Natural killer cell (primary cell): ENCODE measurements at regions of chr19 and their contacts with region 1.

Region 1: GRCh38 chr19:50357178-50358100 is 8.0 kb downstream of the NAPSA start:
- DNase-seq: peak; percentile 84 to 93
- ATAC-seq: peak; percentile 81 to 91 (median 85)
- H3K4me3 ChIP-seq: peak overlapping the region; percentile 65
- H3K4me3 Mint-ChIP-seq: peak overlapping the region; percentile 95
- H3K27ac ChIP-seq: peak overlapping the region; percentile 95
- H3K27ac Mint-ChIP-seq: peak overlapping the region; percentile 97 to 99
- H3K4me1 ChIP-seq: peaks cover 31% of the 10 kb centered on the region
- H3K4me1 Mint-ChIP-seq: peaks cover 31 to 46% of the 10 kb centered on the region in 2 donors
- H3K27me3 ChIP-seq: no peaks in the 10 kb centered on the region
- H3K27me3 Mint-ChIP-seq: no peaks in the 10 kb centered on the region
- CTCF ChIP-seq: peak; percentile 88

Region 2: GRCh38 chr19:50414864-50415660 is 57.6 kb after region 1 on chr19:
- intact Hi-C with region 1: loop called (anchors 1 kb)
- DNase-seq: peak; percentile 72 to 83
- ATAC-seq: peak; percentile 78 to 93 (median 92)
- H3K4me3 ChIP-seq: peak overlapping the region; percentile 28
- H3K4me3 Mint-ChIP-seq: no peak overlapping the region
- H3K27ac ChIP-seq: peak overlapping the region; percentile 84
- H3K27ac Mint-ChIP-seq: peak overlapping the region in 1 of 2 donors; percentile 70
- H3K4me1 ChIP-seq: peaks cover 47% of the 10 kb centered on the region
- H3K4me1 Mint-ChIP-seq: peaks cover 9 to 24% of the 10 kb centered on the region in 2 donors
- H3K27me3 ChIP-seq: peaks cover 3% of the 10 kb centered on the region
- H3K27me3 Mint-ChIP-seq: peaks cover 14 to 15% of the 10 kb centered on the region in 2 donors
- CTCF ChIP-seq: peak; percentile 80

Region 3: GRCh38 chr19:50461066-50461875 is 103.8 kb after region 1 on chr19:
- intact Hi-C with region 1: loop called (anchors 1 kb)
- DNase-seq: peak; percentile 53 to 80
- ATAC-seq: peak; percentile 87 to 97 (median 93)
- H3K4me3 ChIP-seq: no peak overlapping the region
- H3K4me3 Mint-ChIP-seq: no peak overlapping the region
- H3K27ac ChIP-seq: peak overlapping the region; percentile 20
- H3K27ac Mint-ChIP-seq: no peak overlapping the region
- H3K4me1 ChIP-seq: peaks cover 11% of the 10 kb centered on the region
- H3K4me1 Mint-ChIP-seq: peaks cover 0 to 6% of the 10 kb centered on the region in 2 donors
- H3K27me3 ChIP-seq: no peaks in the 10 kb centered on the region
- H3K27me3 Mint-ChIP-seq: peaks cover 0 to 17% of the 10 kb centered on the region in 2 donors
- CTCF ChIP-seq: peak; percentile 70

Region 4: DNA sequence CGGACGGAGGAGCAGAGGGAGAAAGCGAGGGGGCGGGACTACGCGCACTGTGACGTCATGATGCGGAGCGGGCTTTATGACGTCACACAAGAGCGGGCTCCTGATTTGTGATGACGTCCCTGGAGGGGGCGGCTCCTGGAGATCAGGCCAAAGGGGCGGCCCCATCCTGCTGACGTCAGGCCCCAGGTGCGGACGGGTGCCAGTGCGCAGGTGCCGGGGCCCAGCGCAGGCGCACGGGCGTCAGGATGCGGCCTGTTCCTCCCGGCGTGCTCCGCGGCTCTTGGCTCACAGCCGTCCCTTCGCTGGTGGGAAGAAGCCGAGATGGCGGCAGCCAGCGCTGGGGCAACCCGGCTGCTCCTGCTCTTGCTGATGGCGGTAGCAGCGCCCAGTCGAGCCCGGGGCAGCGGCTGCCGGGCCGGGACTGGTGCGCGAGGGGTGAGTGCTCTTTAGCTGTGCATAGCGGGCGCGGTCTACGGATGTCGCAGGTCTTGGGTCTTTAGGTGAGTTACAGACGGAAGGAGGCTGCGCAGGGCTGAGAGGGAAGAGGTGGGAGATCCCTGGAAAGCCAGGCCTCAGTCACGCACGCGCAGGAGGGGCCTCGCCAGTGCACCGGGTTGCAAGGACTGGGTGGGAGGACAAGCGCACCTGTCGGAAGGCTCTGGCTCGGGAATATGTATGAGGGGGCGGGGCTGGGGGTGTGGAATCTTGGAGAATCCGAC is 118.9 kb after region 1 on chr19 and contains the starts of genes EMC10 and GARIN5A:
- intact Hi-C with region 1: loop called (anchors 5 kb)
- DNase-seq: peak; percentile 94 to 98
- ATAC-seq: peak; percentile 94 to 96 (median 96)
- H3K4me3 ChIP-seq: peak within 1 kb of the TSS; percentile 78
- H3K4me3 Mint-ChIP-seq: peak within 1 kb of the TSS; percentile 99
- H3K27ac ChIP-seq: peak within 1 kb of the TSS; percentile 76
- H3K27ac Mint-ChIP-seq: peak within 1 kb of the TSS; percentile 91 to 99
- H3K4me1 ChIP-seq: peaks cover 25% of the 10 kb centered on the region
- H3K4me1 Mint-ChIP-seq: peaks cover 30 to 48% of the 10 kb centered on the region in 2 donors
- H3K27me3 ChIP-seq: no peaks in the 10 kb centered on the region
- H3K27me3 Mint-ChIP-seq: no peaks in the 10 kb centered on the region
- CTCF ChIP-seq: no peak
- total RNA-seq, gene EMC10: 79.5 to 85.1 (median 80.1) TPM
- total RNA-seq, gene GARIN5A: 0.59 TPM in 1 of 3 donors, not detected in the others

Region 5: DNA sequence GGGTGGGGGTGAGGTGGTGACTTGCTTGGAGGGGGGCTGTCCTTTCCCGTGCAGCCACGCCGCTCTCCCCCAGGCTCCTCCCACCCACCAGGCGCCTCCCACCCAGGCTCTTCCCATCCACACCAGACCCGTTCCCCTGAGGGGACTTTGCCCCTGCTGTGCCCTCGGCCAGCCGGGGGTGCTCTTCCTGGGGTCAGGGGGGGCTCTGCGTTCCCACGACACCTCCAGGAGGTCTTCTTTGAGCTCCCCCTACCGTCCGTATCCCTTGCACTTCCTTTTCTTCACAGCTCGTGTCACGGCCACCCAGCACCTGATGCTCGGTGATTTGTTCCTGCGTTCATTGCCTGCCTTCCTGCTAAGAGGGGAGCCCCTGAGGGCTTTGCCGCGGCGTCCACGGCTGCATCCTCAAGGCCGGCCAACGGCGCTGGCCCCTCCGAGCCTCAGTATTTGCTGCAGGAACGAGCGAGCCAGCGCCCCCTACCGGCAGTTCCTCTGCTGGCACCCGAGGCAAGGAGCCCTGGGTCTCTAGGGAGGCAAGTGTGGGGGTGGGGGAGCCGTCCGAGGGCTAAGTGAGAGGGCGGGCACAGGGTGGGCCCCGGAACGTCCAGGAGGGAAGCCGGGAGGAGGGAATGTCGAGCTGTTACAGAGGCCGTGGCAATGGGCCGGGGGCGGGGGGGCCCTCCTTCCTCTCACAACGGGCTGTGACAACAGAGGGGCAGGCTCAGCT is 199.0 kb after region 1 on chr19:
- intact Hi-C with region 1: loop called (anchors 5 kb)
- DNase-seq: peak; percentile 74 to 82
- ATAC-seq: peak; percentile 65 to 85 (median 84)
- H3K4me3 ChIP-seq: peak overlapping the region; percentile 37
- H3K4me3 Mint-ChIP-seq: peak overlapping the region; percentile 94
- H3K27ac ChIP-seq: no peak overlapping the region
- H3K27ac Mint-ChIP-seq: peak overlapping the region in 1 of 2 donors; percentile 15
- H3K4me1 ChIP-seq: peaks cover 13% of the 10 kb centered on the region
- H3K4me1 Mint-ChIP-seq: peaks cover 5 to 17% of the 10 kb centered on the region in 2 donors
- H3K27me3 ChIP-seq: peaks cover 12% of the 10 kb centered on the region
- H3K27me3 Mint-ChIP-seq: peaks cover 40 to 57% of the 10 kb centered on the region in 2 donors
- CTCF ChIP-seq: peak; percentile 87

Region 6: GRCh38 chr19:50777754-50778303 is 420.4 kb after region 1 on chr19:
- intact Hi-C with region 1: loop called (anchors 2 kb)
- DNase-seq: peak in 1 of 2 donors; percentile 28
- ATAC-seq: no peak
- H3K4me3 ChIP-seq: no peak overlapping the region
- H3K4me3 Mint-ChIP-seq: no peak overlapping the region
- H3K27ac ChIP-seq: no peak overlapping the region
- H3K27ac Mint-ChIP-seq: no peak overlapping the region
- H3K4me1 ChIP-seq: no peaks in the 10 kb centered on the region
- H3K4me1 Mint-ChIP-seq: no peaks in the 10 kb centered on the region
- H3K27me3 ChIP-seq: peaks cover 16% of the 10 kb centered on the region
- H3K27me3 Mint-ChIP-seq: peaks cover 46 to 51% of the 10 kb centered on the region in 2 donors
- CTCF ChIP-seq: no peak